ENCODE measurements at regions of chr15 and their contacts with region 1.

Region 1: GRCh38 chr15:90001683-90002427 is 731 bp downstream of the ZNF710 start:
- DNase-seq: peak in 1 of 2 donors; percentile 76
- H3K4me3 ChIP-seq: peak overlapping the region; percentile 86 to 96
- H3K27ac ChIP-seq: peak overlapping the region; percentile 81 to 90
- H3K4me1 ChIP-seq: peaks cover 0 to 34% of the 10 kb centered on the region in 2 donors
- H3K27me3 ChIP-seq: no peaks in the 10 kb centered on the region
- CTCF ChIP-seq: no peak

Region 2: DNA sequence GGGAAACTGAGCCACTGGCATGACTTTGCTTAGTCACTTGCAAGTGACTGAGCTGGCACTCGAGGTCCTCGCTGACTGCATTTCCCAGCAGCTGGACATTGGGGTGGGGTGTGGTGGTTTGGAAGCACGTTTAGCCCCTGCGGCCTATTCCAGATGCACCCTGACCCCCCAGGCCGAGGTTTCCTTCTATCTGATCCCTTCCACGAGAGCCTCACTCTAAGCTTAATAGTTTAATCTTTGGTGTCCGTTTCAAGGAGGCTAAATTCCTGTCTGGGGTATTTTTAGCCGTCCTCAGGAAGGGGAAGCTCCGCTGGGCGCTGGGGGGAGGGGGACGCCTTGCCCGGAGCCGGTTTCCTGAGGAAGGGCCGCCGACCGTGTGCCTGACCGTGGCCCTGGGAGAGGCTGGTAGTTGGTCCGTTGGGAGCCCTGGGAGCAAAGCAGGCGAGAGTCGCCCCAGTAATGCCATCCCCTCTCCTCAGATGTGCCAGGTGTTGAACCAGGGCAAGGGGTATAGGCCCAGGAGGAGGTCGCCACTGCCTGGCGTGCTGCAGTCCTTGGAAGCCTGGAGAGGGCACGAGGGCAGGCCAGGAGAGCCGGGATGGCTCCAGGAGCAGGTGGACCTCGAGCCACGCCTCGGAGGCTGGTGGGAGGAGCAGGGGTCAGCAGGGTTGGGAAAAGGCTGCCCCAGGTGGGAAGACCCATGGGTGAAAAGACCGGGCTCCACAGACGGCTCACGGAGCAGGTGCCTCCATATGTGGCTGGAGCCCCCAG is 63.2 kb after region 1 on chr15:
- intact Hi-C with region 1: loop called (anchors 5 kb)
- DNase-seq: no peak
- H3K4me3 ChIP-seq: peak overlapping the region in 1 of 2 donors; percentile 32
- H3K27ac ChIP-seq: peak overlapping the region; percentile 81 to 83
- H3K4me1 ChIP-seq: peaks cover 0 to 12% of the 10 kb centered on the region in 2 donors
- H3K27me3 ChIP-seq: no peaks in the 10 kb centered on the region
- CTCF ChIP-seq: no peak